H1 (cell line): ENCODE measurements at regions of chr19 and their contacts with region 1.

Region 1: GRCh38 chr19:46076951-46077816 is 36.4 kb upstream of the IGFL4 start:
- DNase-seq: peak; percentile 63 to 85
- H3K4me3 ChIP-seq: peak overlapping the region; percentile 49 to 75 (median 74)
- H3K27ac ChIP-seq: no peak overlapping the region
- H3K4me1 ChIP-seq: peaks cover 0 to 3% (median 1%) of the 10 kb centered on the region in 4 experiments; a peak in 2 of 7 replicates
- H3K27me3 ChIP-seq: peaks cover 2 to 17% (median 11%) of the 10 kb centered on the region in 4 experiments
- CTCF ChIP-seq: peak; percentile 85 to 100 (median 97)
- EP300 ChIP-seq: no peak
- POLR2A ChIP-seq: no peak
- RAD21 ChIP-seq: peak; percentile 94 to 97

Region 2: GRCh38 chr19:45809643-45810159 is 267.5 kb before region 1 on chr19:
- CTCF ChIA-PET with region 1: no interaction called
- POLR2A ChIA-PET with region 1: no interaction called
- DNase-seq: no peak
- H3K4me3 ChIP-seq: no peak overlapping the region
- H3K27ac ChIP-seq: no peak overlapping the region
- H3K4me1 ChIP-seq: peaks cover 0 to 5% (median 4%) of the 10 kb centered on the region in 4 experiments; a peak in 5 of 7 replicates
- H3K27me3 ChIP-seq: peaks cover 0 to 2% (median 0%) of the 10 kb centered on the region in 4 experiments; a peak in 3 of 7 replicates
- CTCF ChIP-seq: no peak
- EP300 ChIP-seq: no peak
- POLR2A ChIP-seq: no peak
- RAD21 ChIP-seq: no peak

Region 3: GRCh38 chr19:45913874-45914830 is 163.0 kb before region 1 on chr19 and contains the start of gene NANOS2:
- CTCF ChIA-PET with region 1: interaction called, 14 read pairs
- POLR2A ChIA-PET with region 1: no interaction called
- DNase-seq: peak; percentile 54 to 91
- H3K4me3 ChIP-seq: no peak within 1 kb of the TSS
- H3K27ac ChIP-seq: no peak within 1 kb of the TSS
- H3K4me1 ChIP-seq: peaks cover 0 to 3% (median 0%) of the 10 kb centered on the region in 4 experiments; a peak in 3 of 7 replicates
- H3K27me3 ChIP-seq: no peaks in the 10 kb centered on the region
- CTCF ChIP-seq: peak; percentile 70 to 89 (median 88)
- EP300 ChIP-seq: no peak
- POLR2A ChIP-seq: no peak
- RAD21 ChIP-seq: peak; percentile 89 to 93
- total RNA-seq, gene NANOS2: not detected in 2 replicates

Region 4: DNA sequence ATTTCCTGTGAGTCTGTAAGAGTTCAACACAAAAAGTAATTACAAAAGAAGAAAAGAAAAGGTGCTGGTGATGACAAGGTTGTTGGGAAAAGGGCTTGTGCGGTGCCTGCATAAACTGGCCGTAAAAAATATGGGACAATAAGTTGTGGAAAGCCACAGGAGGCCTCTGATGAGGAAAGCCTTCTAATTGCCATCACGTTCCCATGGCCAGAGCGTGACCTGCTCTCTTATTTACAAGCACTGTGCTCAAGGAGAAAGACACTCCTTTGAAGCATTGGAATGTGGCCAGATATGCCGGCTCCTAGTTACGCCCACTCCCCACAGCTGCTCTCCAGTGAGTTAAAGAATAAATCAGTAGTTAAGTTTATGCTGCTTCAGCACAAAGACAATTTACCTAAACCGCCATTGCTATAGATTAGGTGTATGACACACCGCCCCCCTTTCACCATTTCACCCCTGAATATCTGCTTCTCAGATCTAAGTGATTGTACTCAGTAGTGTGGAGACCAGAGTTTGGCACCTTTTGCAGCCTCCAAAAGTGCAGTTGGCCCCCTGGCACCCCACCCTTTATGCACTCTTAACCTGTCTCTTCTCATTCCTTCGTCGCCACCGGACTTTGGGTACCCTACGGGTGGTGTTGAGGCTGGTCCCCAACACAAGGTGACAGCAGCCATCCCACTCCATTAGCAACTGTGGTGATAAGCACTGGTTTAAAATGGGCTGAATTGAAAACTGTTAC is 46.2 kb before region 1 on chr19:
- CTCF ChIA-PET with region 1: interaction called, 250 read pairs
- POLR2A ChIA-PET with region 1: interaction called, 7 read pairs
- DNase-seq: no peak
- H3K4me3 ChIP-seq: no peak overlapping the region
- H3K27ac ChIP-seq: no peak overlapping the region
- H3K4me1 ChIP-seq: no peaks in the 10 kb centered on the region
- H3K27me3 ChIP-seq: no peaks in the 10 kb centered on the region
- CTCF ChIP-seq: no peak
- EP300 ChIP-seq: no peak
- POLR2A ChIP-seq: no peak
- RAD21 ChIP-seq: no peak

Region 5: DNA sequence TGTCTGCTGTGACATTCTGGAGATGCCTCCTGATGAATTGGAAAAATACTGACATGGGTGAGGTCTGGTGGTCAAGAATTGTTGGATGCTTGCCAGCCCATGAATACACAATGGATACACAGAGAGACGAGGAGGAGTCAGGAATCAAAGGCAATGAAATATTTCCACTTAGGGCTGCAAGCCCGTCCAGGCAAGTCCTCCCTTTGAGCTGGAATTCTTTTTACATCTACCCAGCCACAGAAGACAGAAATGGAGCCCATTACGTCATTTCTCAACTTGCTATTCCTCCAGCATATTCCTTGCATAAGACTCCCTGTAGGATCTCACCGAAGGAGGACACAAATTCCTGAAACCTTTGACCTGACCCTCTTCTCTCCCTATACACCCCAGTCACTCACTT is 20.6 kb before region 1 on chr19:
- CTCF ChIA-PET with region 1: interaction called, 31 read pairs
- POLR2A ChIA-PET with region 1: no interaction called
- DNase-seq: no peak
- H3K4me3 ChIP-seq: no peak overlapping the region
- H3K27ac ChIP-seq: no peak overlapping the region
- H3K4me1 ChIP-seq: no peaks in the 10 kb centered on the region
- H3K27me3 ChIP-seq: no peaks in the 10 kb centered on the region; a peak in 1 of 7 replicates
- CTCF ChIP-seq: no peak
- EP300 ChIP-seq: no peak
- POLR2A ChIP-seq: no peak
- RAD21 ChIP-seq: no peak

Region 6: DNA sequence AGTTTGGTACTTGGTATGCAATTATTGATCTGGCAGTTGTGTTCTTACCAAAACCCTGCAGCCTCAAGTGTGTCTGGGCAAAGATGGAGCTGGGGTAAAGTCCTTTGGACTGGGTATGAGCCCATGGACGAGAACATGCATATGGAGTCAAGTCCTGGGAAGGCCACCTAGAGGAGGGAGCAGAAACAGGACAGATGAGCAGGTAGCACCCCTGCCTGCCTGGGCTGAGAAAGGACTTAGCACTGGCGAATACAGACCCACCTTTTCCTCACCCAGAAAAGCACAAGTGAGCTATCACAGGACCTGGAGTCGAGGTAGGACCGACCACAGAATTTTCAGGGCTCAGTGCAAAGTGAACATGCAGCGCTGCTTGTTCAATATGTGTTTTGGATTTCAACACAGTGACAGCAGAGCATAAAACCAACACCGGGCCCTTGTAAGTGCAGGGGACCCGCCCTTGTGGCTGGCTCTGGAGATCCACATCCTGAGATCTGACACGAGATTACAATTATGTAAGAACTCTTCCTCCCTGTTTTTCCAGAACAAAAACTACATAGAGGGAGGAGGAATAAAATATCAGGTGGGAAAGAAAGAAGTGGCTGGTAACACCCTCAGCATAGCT is 96.8 kb after region 1 on chr19:
- CTCF ChIA-PET with region 1: interaction called, 28 read pairs
- POLR2A ChIA-PET with region 1: no interaction called
- DNase-seq: no peak
- H3K4me3 ChIP-seq: no peak overlapping the region
- H3K27ac ChIP-seq: no peak overlapping the region
- H3K4me1 ChIP-seq: no peaks in the 10 kb centered on the region
- H3K27me3 ChIP-seq: no peaks in the 10 kb centered on the region
- CTCF ChIP-seq: peak in 2 of 3 experiments; percentile 13 to 42; a peak in 2 of 4 replicates
- EP300 ChIP-seq: no peak
- POLR2A ChIP-seq: no peak
- RAD21 ChIP-seq: no peak; a peak in 1 of 4 replicates

Region 7: GRCh38 chr19:46192992-46193650 is 115.9 kb after region 1 on chr19:
- CTCF ChIA-PET with region 1: interaction called, 143 read pairs
- POLR2A ChIA-PET with region 1: interaction called, 3 read pairs
- DNase-seq: no peak
- H3K4me3 ChIP-seq: no peak overlapping the region
- H3K27ac ChIP-seq: no peak overlapping the region
- H3K4me1 ChIP-seq: no peaks in the 10 kb centered on the region
- H3K27me3 ChIP-seq: no peaks in the 10 kb centered on the region
- CTCF ChIP-seq: no peak
- EP300 ChIP-seq: no peak
- POLR2A ChIP-seq: no peak
- RAD21 ChIP-seq: no peak

Region 8: DNA sequence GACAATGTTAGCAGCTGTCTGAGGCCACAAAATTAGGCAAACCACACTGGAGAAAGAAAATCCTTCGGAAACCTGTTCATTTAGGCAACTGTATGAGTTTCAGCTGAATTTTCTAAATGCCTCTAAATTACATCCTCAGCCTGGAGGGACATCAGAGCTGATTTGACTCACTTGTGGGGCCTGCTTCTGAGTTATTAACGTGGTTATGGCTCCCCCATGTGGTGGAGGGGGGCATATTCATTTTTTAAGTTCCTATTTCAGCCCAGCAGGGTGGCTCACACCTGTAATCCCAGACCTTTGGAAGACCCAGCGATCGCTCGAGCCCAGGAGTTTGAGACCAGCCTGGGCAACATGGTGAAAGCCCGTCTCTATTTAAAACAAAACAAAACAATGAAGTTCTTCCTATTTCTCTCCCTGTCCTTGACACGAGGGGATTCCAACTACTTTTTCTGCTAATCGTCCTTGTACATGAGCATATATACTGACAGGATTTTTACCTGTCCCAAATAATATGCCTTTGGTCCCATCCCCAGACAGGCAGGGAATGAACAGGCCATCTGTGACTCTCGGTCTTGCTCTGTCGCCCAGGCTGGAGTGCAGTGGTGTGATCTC is 188.1 kb after region 1 on chr19:
- CTCF ChIA-PET with region 1: interaction called, 365 read pairs
- POLR2A ChIA-PET with region 1: interaction called, 7 read pairs
- DNase-seq: peak; percentile 79 to 82
- H3K4me3 ChIP-seq: no peak overlapping the region
- H3K27ac ChIP-seq: no peak overlapping the region
- H3K4me1 ChIP-seq: peaks cover 0 to 3% (median under 1%) of the 10 kb centered on the region in 4 experiments; a peak in 3 of 7 replicates
- H3K27me3 ChIP-seq: no peaks in the 10 kb centered on the region
- CTCF ChIP-seq: peak; percentile 50 to 96 (median 70)
- EP300 ChIP-seq: no peak
- POLR2A ChIP-seq: no peak
- RAD21 ChIP-seq: peak; percentile 95 to 96

Region 9: GRCh38 chr19:46339446-46339845 is 262.3 kb after region 1 on chr19:
- CTCF ChIA-PET with region 1: no interaction called
- POLR2A ChIA-PET with region 1: no interaction called
- DNase-seq: no peak
- H3K4me3 ChIP-seq: no peak overlapping the region
- H3K27ac ChIP-seq: no peak overlapping the region
- H3K4me1 ChIP-seq: no peaks in the 10 kb centered on the region
- H3K27me3 ChIP-seq: no peaks in the 10 kb centered on the region
- CTCF ChIP-seq: no peak
- EP300 ChIP-seq: no peak
- POLR2A ChIP-seq: no peak
- RAD21 ChIP-seq: no peak